ENCODE measurements at regions of chr12 and their contacts with region 1.

Region 1: DNA sequence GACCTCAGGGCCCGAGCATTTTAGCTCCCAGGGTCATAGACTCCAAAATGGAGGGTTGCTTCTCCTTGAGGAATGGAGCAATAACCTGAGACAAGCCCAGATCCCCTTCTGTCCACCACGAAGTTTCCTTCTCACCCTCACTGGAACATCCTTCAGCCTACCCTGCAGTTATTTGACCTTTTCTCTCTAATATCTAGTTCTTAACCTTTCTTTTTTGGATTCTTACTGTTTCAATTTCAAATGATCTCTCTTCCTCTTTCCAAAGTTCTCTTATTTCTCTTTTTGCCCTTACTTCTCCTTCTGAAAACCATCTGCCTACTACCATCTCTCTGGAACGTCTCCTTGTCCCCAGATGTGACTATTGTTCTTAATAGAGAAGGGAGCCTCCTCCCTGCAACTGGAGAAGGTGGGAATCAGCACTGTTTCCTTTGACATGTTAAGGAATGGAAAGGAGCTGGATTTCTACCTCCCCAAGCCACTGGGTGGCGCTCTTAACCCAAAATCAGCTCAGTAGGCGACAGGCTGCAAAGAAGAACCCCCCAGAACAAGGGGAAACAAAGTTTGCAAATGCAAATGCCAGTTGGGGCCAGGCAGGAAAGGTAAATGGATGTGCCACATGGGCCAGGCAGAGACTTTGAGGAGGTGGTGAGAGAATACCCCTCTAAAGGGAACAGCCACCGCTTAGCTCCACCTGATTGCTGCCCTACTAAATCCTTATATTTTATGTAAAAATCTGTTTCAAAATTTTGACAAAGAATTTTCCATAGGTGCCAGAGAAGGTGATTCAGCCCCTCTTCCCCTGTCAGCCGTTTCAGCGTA is 22.4 kb upstream of the PDE1B start:
- H3K4me3 ChIP-seq: no peak overlapping the region
- H3K27ac ChIP-seq: no peak overlapping the region
- H3K4me1 ChIP-seq: no peaks in the 10 kb centered on the region
- CTCF ChIP-seq: peak; percentile 83

Region 2: GRCh38 chr12:54398995-54399793 is 127.8 kb before region 1 on chr12:
- CTCF ChIA-PET with region 1: interaction called, 21 read pairs
- POLR2A ChIA-PET with region 1: no interaction called
- H3K4me3 ChIP-seq: no peak overlapping the region
- H3K27ac ChIP-seq: no peak overlapping the region
- H3K4me1 ChIP-seq: no peaks in the 10 kb centered on the region
- CTCF ChIP-seq: peak; percentile 96

Region 3: DNA sequence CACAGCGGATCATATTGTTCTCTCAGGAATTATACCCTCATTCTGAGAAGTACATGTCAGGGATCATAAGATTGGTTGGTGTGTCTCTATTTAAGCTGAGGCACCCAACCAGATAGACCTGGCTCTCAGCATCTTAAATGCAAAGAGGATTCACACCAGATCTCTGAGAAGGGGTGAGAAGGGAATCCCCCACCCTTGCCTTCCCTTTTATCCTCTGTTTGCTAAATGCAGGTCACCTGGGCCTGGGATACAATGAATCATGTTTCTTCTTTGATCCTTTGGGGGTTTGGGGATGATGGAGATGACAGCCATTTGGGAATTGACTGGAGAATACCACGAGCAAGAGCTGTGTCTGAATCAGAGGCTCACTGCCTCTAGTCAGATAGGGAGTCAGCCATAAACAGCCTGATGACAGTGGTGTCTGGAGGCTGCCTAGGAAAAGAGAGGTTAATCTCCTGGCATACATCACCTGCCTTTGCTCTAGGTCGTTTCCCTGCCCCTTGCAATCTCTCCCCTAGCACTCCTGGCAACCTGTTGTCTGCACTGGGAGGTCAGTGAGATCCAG is 11.2 kb after region 1 on chr12:
- CTCF ChIA-PET with region 1: interaction called, 28 read pairs
- POLR2A ChIA-PET with region 1: no interaction called
- H3K4me3 ChIP-seq: no peak overlapping the region
- H3K27ac ChIP-seq: no peak overlapping the region
- H3K4me1 ChIP-seq: no peaks in the 10 kb centered on the region
- CTCF ChIP-seq: no peak

Region 4: GRCh38 chr12:54565310-54565985 is 38.4 kb after region 1 on chr12:
- CTCF ChIA-PET with region 1: interaction called, 32 read pairs
- POLR2A ChIA-PET with region 1: no interaction called
- H3K4me3 ChIP-seq: no peak overlapping the region
- H3K27ac ChIP-seq: no peak overlapping the region
- H3K4me1 ChIP-seq: peaks cover 5% of the 10 kb centered on the region; the same call in 1 of the 2 replicates
- CTCF ChIP-seq: no peak

Region 5: DNA sequence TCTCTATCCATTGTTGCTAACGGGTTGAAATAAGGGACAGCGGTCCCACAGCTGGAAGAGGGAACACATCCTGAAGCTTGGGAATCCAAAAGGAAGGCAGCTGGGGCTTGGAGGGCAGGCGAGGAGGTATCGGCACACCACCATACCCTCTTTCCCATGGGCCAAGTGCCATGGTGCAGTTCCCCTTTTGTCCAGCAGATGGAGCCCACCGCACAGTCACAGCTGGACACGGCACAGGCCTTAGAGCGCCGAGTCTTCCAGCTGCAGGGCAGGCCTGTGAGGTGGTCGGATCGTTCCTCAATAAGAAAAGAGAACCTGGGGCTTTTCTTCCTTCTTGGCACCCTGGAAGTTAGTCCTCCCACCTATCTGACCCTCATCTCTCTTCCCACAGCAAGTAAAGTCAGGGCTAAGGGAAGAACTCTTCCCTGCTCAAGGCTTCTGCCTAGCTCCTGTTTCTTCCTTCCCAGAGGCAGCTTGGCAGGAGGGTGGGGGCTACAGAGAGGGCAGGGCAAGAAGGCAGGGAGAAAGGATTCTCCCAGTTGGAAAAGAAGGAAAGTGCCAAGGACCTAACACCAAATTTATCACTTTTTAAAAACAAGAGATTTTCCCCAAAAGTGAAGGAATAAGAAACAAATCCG is 52.8 kb after region 1 on chr12:
- CTCF ChIA-PET with region 1: interaction called, 73 read pairs
- POLR2A ChIA-PET with region 1: interaction called, 4 read pairs
- H3K4me3 ChIP-seq: no peak overlapping the region
- H3K27ac ChIP-seq: no peak overlapping the region
- H3K4me1 ChIP-seq: no peaks in the 10 kb centered on the region; the same call in 1 of the 2 replicates
- CTCF ChIP-seq: peak; percentile 97

Region 6: GRCh38 chr12:54596526-54596946 is 69.5 kb after region 1 on chr12:
- CTCF ChIA-PET with region 1: interaction called, 40 read pairs
- POLR2A ChIA-PET with region 1: no interaction called
- H3K4me3 ChIP-seq: no peak overlapping the region
- H3K27ac ChIP-seq: no peak overlapping the region
- H3K4me1 ChIP-seq: no peaks in the 10 kb centered on the region
- CTCF ChIP-seq: peak; percentile 49; the same call in 1 of the 2 replicates

Region 7: DNA sequence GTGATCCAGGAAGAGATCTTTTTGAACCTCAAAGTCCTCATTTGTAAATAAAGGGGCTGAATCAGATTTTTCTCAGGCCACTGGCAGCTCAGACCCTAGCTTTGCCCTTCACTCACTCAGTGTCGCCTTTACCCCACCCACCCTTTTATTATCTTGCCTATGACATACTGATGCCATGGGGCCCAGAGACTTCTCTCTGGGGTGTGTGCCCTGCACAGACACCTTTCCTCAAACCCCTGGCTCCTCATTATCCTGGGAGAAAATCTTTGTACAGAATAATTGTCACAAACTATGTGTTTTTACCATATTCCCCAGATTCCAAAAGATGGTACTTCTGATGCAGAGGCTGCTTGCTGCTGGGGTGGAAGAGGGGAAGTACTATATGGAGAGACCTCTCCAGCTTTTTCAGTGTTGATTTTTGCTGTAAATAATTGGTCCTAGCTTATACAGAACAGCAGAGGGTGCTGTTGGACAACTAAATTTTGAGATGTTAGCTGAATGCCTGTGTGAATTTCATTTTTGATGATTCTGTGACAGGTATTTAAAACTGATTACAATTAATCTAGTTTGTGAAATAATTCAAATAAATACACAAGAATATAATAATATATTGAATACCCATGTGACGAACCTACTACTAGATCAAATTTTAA is 175.0 kb after region 1 on chr12:
- CTCF ChIA-PET with region 1: interaction called, 13 read pairs
- POLR2A ChIA-PET with region 1: no interaction called
- H3K4me3 ChIP-seq: no peak overlapping the region
- H3K27ac ChIP-seq: no peak overlapping the region
- H3K4me1 ChIP-seq: no peaks in the 10 kb centered on the region
- CTCF ChIP-seq: no peak

Region 8: DNA sequence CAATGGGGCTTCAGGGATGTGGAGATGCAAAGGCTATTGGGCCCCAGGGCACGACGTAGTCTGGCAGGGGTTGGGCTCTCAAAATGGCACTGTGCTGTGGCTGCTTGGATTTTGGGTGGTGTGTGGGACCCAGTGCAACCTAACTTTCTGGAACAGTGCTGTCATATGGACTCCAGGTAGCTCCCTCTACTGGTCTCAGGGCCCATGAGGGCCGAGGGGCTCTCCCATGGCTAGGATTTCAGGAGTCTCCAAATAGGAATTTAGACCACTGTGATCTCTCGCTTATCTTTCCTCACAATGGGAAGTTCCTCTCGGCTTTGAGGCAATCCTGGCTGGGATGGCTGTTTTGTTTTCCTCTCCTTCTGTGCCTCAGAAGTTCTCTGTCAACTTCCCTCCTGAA is 259.1 kb after region 1 on chr12:
- CTCF ChIA-PET with region 1: no interaction called
- POLR2A ChIA-PET with region 1: no interaction called
- H3K4me3 ChIP-seq: no peak overlapping the region
- H3K27ac ChIP-seq: no peak overlapping the region
- H3K4me1 ChIP-seq: no peaks in the 10 kb centered on the region
- CTCF ChIP-seq: no peak